ENCODE measurements at regions of chr9 and their contacts with region 1.

Region 1: DNA sequence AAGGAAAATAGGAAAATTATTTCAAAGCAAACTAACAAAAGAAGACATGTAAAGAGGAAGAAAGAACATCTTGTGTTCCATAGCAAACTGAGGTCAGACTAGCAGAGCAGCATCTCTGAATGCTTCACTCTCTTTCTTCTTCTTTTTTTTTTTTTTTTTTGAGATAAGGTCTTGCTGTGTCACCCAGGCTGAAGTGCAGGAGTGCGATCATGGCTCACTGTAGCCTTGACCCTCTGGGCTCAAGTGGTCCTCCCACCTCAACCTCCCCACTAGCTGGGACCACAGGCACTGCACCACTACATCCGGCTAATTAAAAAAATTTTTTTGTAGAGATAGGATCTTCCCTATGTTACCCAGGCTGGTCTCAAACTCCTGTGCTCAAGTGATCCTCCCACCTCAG is 36.6 kb downstream of the MELK start:
- DNase-seq: no peak
- ATAC-seq: no peak
- H3K4me3 ChIP-seq: no peak overlapping the region
- H3K27ac ChIP-seq: no peak overlapping the region
- H3K4me1 ChIP-seq: no peaks in the 10 kb centered on the region
- CTCF ChIP-seq: no peak
- EP300 ChIP-seq: no peak
- POLR2A ChIP-seq: no peak
- RAD21 ChIP-seq: no peak

Region 2: DNA sequence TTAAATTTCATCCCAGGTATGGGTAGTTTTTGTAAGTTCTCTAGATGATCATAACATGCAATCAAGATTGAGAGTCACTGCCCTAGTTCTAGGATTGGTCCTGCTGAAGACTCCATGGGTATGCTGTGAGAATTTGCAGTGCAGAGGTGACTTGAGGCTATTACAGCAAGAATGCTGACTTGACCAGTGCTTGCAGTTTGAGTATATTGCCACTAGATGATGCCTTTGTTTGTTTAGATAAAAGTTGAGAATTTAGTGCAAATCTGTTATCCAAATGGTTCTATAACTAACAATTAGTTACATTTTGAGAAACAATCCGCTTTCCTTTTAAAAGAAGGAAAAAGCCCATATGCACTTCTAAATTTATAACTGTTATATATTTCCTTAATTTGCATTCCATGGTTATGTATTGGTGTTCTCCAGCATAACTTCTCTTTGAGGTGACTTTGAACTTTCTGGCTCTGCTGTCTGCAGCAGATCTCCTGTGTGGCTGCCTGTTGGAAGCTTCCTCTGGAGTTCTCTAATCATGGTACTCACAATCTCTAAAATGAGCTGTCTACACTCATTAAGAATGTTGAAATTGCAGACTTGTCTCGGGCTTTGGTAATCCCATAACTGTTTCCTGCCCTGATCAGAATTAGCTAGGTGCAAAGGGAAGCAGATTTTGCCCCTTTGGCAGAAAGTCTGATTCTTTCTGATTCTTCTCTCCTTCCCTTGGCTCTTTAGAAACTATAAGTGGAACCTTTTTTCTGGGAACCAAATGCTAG is 11.7 kb before region 1 on chr9:
- CTCF ChIA-PET with region 1: interaction called, 18 read pairs
- POLR2A ChIA-PET with region 1: no interaction called
- DNase-seq: peak; percentile 73 to 78
- ATAC-seq: peak; percentile 97 to 99
- H3K4me3 ChIP-seq: no peak overlapping the region
- H3K27ac ChIP-seq: no peak overlapping the region
- H3K4me1 ChIP-seq: no peaks in the 10 kb centered on the region
- CTCF ChIP-seq: peak; percentile 57
- EP300 ChIP-seq: no peak
- POLR2A ChIP-seq: no peak
- RAD21 ChIP-seq: peak; percentile 18 to 27; a peak in 2 of 5 replicates

Measured in A549 (cell line).